Caco-2 (cell line): ENCODE measurements at regions of chr22 and their contacts with region 1.

Region 1: DNA sequence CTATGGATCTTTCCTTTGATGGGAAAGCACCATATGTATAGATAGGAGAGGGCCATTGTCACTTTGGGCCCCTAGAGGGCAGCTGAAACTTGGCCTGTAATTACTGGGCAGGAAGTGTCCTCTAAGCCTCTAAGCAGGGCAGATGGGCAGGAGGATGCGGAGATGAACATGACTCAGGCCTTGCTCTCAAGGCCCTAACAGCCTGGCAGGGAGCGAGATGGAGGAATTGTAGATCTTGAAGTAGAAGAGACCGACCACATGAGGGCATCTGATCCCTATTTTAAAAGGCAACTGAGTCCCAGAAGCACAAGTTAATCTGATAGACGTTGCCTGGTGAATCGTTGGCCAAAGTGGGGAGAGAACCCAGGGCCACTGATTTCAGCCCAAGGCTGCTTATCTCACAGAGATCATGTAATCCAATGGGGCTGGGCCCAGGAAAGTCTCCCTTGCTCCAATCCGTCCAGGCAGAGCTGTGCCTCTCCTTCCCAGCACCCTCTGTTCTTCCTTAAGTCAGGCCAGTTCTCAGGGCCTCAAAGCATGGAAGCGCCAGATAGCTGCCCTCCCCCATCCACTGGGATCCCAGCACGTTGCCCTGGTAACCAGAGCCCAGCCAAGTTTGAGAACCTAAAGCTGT is 2.5 kb upstream of the SEPTIN3 start:
- DNase-seq: peak; percentile 48 to 54
- H3K4me3 ChIP-seq: no peak overlapping the region
- H3K4me3 Mint-ChIP-seq: no peak overlapping the region
- H3K27ac Mint-ChIP-seq: no peak overlapping the region
- H3K4me1 ChIP-seq: no peaks in the 10 kb centered on the region
- H3K4me1 Mint-ChIP-seq: no peaks in the 10 kb centered on the region
- H3K27me3 ChIP-seq: no peaks in the 10 kb centered on the region
- H3K27me3 Mint-ChIP-seq: no peaks in the 10 kb centered on the region
- CTCF ChIP-seq: peak in 1 of 2 experiments; percentile 41

Region 2: DNA sequence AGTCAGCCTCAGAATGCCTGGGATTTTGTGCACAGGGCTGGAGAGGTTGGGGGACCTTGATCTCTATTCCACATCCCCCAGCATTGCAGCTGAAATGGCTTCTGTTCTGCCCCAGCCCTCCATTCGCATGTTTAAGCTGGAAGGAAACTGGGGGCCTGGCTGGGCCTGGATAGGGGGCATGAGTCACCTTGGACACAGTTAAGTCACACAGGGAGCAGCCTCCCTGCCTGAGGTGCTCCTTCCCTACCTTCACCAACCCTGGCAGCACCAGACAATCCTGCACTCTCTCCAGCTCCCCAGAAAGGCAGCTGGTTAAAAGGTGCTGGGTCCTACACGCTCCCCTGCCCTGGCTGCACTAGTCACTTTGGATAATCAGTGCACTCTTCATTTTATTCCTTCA is 14.0 kb before region 1 on chr22:
- CTCF ChIA-PET with region 1: no interaction called
- POLR2A ChIA-PET with region 1: no interaction called
- intact Hi-C with region 1: no loop called
- DNase-seq: no peak
- H3K4me3 ChIP-seq: no peak overlapping the region
- H3K4me3 Mint-ChIP-seq: no peak overlapping the region
- H3K27ac Mint-ChIP-seq: no peak overlapping the region
- H3K4me1 ChIP-seq: peaks cover 6% of the 10 kb centered on the region
- H3K4me1 Mint-ChIP-seq: peaks cover 6% of the 10 kb centered on the region
- H3K27me3 ChIP-seq: no peaks in the 10 kb centered on the region
- H3K27me3 Mint-ChIP-seq: no peaks in the 10 kb centered on the region
- CTCF ChIP-seq: no peak

Region 3: GRCh38 chr22:42070517-42071422 is 104.0 kb after region 1 on chr22 and contains the start of gene NAGA:
- CTCF ChIA-PET with region 1: interaction called, 4 read pairs
- POLR2A ChIA-PET with region 1: no interaction called
- intact Hi-C with region 1: loop called (anchors 5 kb)
- DNase-seq: peak; percentile 94 to 96
- H3K4me3 ChIP-seq: peak within 1 kb of the TSS; percentile 70
- H3K4me3 Mint-ChIP-seq: peak within 1 kb of the TSS; percentile 92
- H3K27ac Mint-ChIP-seq: peak within 1 kb of the TSS; percentile 89
- H3K4me1 ChIP-seq: peaks cover 26% of the 10 kb centered on the region
- H3K4me1 Mint-ChIP-seq: peaks cover 5% of the 10 kb centered on the region
- H3K27me3 ChIP-seq: no peaks in the 10 kb centered on the region
- H3K27me3 Mint-ChIP-seq: no peaks in the 10 kb centered on the region
- CTCF ChIP-seq: no peak
- total RNA-seq, gene NAGA: 27.8 and 28.3 TPM in 2 replicates

Region 4: GRCh38 chr22:42114721-42115120 is 148.0 kb after region 1 on chr22:
- CTCF ChIA-PET with region 1: interaction called, 4 read pairs
- POLR2A ChIA-PET with region 1: no interaction called
- intact Hi-C with region 1: loop called (anchors 1 kb)
- DNase-seq: peak in 1 of 2 experiments; percentile 47
- H3K4me3 ChIP-seq: no peak overlapping the region
- H3K4me3 Mint-ChIP-seq: no peak overlapping the region
- H3K27ac Mint-ChIP-seq: no peak overlapping the region
- H3K4me1 ChIP-seq: no peaks in the 10 kb centered on the region
- H3K4me1 Mint-ChIP-seq: no peaks in the 10 kb centered on the region
- H3K27me3 ChIP-seq: no peaks in the 10 kb centered on the region
- H3K27me3 Mint-ChIP-seq: no peaks in the 10 kb centered on the region
- CTCF ChIP-seq: peak; percentile 34 to 35